Psoas muscle (tissue), 8 donors: ENCODE measurements at regions of chr2 and their contacts with region 1.

Region 1: DNA sequence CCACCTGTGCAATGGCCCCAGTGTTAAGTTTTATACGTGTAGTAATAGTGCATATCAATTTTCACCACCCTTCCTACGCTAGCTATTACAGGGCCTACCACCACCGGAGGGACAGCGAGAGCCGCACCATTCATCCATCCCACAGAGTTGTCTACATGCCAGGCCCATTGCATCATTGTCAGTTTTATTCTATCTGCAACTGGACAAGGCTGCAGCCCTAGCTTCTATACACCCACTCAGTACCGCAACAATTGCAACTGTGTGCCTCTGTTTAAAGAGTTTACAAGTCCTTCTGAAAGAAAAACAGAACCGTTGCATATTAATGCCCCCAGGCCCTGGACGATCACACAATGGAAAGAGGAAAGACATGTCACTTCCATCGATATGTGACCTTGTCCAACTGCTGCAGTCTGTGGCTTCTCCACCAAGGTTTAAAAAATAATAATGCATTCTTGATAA is 58.6 kb downstream of the ZEB2 start:
- DNase-seq: peak; percentile 42 to 58
- ATAC-seq: peak; percentile 80 to 89 (median 84)
- H3K4me3 ChIP-seq: no peak overlapping the region
- H3K27ac ChIP-seq: no peak overlapping the region
- H3K4me1 ChIP-seq: peaks cover 29% of the 10 kb centered on the region
- H3K27me3 ChIP-seq: no peaks in the 10 kb centered on the region
- CTCF ChIP-seq: peak; percentile 16

Region 2: DNA sequence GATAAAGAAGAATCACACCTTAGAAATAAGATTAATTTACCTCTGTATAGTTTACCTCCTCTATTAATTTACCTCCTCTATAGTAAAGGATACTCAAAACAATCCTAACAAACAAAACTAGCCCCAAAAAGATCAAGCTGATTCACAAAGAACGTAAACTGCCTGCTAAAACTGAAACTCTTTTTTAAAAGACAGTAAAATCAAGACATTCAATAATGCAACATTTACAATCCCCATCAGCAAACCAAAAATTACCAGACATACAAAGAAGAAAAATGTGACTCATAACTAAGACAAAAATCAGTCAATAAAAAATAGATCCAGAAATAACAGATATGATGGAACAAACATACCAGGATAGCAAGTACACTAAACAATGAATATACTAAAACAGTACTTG is 157.1 kb before region 1 on chr2:
- intact Hi-C with region 1: no loop called
- DNase-seq: no peak
- ATAC-seq: no peak
- H3K4me3 ChIP-seq: no peak overlapping the region
- H3K27ac ChIP-seq: no peak overlapping the region
- H3K4me1 ChIP-seq: no peaks in the 10 kb centered on the region
- H3K27me3 ChIP-seq: no peaks in the 10 kb centered on the region
- CTCF ChIP-seq: no peak

Region 3: GRCh38 chr2:144505245-144505831 is 44.0 kb after region 1 on chr2:
- intact Hi-C with region 1: loop called in 1 of 2 experiments (anchors 5 kb)
- DNase-seq: no peak
- ATAC-seq: peak in 3 of 4 donors; percentile 4 to 28 (median 20)
- H3K4me3 ChIP-seq: peak overlapping the region; percentile 1
- H3K27ac ChIP-seq: peak overlapping the region; percentile 96
- H3K4me1 ChIP-seq: peaks cover 65% of the 10 kb centered on the region
- H3K27me3 ChIP-seq: no peaks in the 10 kb centered on the region
- CTCF ChIP-seq: no peak

Region 4: DNA sequence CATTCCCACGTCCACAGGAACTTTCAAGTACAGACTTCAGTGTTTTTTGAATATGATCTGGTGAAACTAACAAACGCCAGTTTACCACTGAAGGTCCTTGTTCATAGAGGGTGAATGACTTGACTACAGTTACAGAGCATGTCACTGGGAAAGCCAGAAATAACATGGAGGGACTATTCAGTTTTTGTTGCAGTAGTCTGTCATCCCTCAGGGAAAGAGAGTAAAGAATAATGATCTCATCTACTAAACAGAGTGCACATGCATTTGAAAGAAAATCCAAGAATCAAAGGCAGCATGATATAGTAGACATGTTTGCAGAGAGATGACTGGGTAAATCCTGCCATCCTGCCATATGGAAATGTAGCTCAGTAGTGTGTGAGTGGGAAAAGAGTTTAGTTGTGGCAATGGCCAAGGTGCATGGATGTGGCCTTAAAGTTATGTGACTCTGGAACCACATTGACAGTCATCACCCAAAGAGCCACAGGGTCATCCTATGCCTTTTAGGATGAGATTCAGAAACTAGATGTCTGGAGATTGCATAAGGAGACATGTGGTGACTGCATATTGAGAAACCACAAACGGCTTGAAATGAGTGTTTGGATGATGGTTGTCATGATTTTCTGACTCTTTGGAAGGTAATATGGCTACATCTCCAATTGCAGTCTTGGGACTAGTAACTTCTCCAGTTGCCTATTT is 183.9 kb after region 1 on chr2:
- intact Hi-C with region 1: no loop called
- DNase-seq: no peak
- ATAC-seq: no peak
- H3K4me3 ChIP-seq: no peak overlapping the region
- H3K27ac ChIP-seq: no peak overlapping the region
- H3K4me1 ChIP-seq: no peaks in the 10 kb centered on the region
- H3K27me3 ChIP-seq: no peaks in the 10 kb centered on the region
- CTCF ChIP-seq: no peak

Region 5: DNA sequence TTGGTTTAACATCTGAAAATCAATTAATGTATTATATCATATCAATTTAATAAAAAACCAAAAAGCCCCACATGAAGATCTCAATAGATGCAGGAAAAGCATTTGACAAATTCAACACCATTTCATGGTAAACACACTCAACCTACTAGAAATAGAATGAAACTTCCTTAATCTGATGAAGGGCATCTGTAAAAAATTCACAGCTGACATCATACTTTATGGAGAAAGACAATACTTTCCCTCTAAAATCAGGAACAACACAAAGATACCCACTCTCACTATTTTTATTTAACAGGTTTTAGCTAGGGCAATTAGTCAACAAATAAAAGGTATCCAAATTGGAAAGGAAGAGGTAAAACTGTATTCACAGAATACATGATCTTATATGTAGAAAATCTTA is 361.6 kb after region 1 on chr2:
- intact Hi-C with region 1: no loop called
- DNase-seq: no peak
- ATAC-seq: no peak
- H3K4me3 ChIP-seq: no peak overlapping the region
- H3K27ac ChIP-seq: no peak overlapping the region
- H3K4me1 ChIP-seq: no peaks in the 10 kb centered on the region
- H3K27me3 ChIP-seq: no peaks in the 10 kb centered on the region
- CTCF ChIP-seq: no peak